Ovary (tissue), 10 donors: ENCODE measurements at regions of chr10 and their contacts with region 1.

Region 1: GRCh38 chr10:11255796-11256444 is 238.2 kb downstream of the CELF2 start:
- DNase-seq: peak; percentile 60 to 71 (median 66)
- H3K4me3 ChIP-seq: no peak overlapping the region
- H3K27ac ChIP-seq: no peak overlapping the region
- H3K4me1 ChIP-seq: peaks cover 15% of the 10 kb centered on the region
- H3K27me3 ChIP-seq: no peaks in the 10 kb centered on the region
- CTCF ChIP-seq: no peak
- EP300 ChIP-seq: no peak
- POLR2A ChIP-seq: no peak

Region 2: GRCh38 chr10:11045995-11046775 is 209.7 kb before region 1 on chr10:
- intact Hi-C with region 1: loop called in 1 of 4 experiments (anchors 10 kb)
- DNase-seq: peak; percentile 54 to 73 (median 63)
- H3K4me3 ChIP-seq: no peak overlapping the region
- H3K27ac ChIP-seq: peak overlapping the region; percentile 71 to 72
- H3K4me1 ChIP-seq: peaks cover 22% of the 10 kb centered on the region
- H3K27me3 ChIP-seq: no peaks in the 10 kb centered on the region
- CTCF ChIP-seq: no peak
- EP300 ChIP-seq: no peak
- POLR2A ChIP-seq: no peak

Region 3: DNA sequence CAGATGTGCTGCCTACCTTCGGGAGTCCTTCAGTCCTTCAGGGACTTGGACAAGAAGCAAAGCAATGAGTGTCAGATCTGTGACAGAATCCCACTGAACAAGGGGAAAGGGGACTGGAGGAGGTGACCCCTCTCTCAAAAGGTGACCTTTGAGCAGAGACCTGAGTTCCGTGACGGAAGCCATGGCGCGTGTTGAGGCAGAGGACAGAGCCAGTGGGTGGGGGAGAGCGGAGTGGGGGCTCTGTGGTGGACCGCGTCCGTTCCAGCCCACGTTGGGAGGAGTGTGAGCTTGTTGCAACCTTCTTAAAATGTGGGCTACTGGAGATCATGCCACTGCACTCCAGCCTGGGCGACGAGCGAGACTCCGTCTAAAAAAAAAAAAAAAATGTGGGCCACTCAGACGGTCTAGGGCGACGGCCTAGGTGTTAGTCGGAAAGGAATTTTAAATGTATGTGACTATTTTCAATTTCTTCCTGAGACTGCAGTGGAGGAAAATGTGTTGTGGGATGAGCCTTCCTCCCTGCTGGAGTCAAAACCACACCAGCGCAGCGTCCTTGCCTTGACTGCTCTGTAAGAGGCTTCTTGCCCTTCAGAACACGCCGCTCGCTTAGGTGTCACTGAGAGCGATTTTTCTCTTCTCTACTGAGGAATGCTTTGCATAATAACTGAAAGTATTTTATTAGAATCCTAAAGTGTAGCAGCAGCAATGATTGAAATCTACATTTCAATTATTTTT is 34.4 kb after region 1 on chr10:
- intact Hi-C with region 1: loop called in 1 of 4 experiments (anchors 2 kb)
- DNase-seq: no peak
- H3K4me3 ChIP-seq: no peak overlapping the region
- H3K27ac ChIP-seq: no peak overlapping the region
- H3K4me1 ChIP-seq: no peaks in the 10 kb centered on the region
- H3K27me3 ChIP-seq: no peaks in the 10 kb centered on the region
- CTCF ChIP-seq: no peak
- EP300 ChIP-seq: no peak
- POLR2A ChIP-seq: no peak